ENCODE measurements at regions of chr10 and their contacts with region 1.

Region 1: GRCh38 chr10:24209946-24210491 is 1.1 kb downstream of the KIAA1217 start:
- DNase-seq: peak; percentile 70
- H3K4me3 ChIP-seq: peak overlapping the region; percentile 48
- H3K27ac ChIP-seq: peak overlapping the region; percentile 79
- H3K4me1 ChIP-seq: peaks cover 44% of the 10 kb centered on the region
- H3K27me3 ChIP-seq: no peaks in the 10 kb centered on the region
- CTCF ChIP-seq: no peak

Region 2: GRCh38 chr10:23897861-23898260 is 312.2 kb before region 1 on chr10:
- CTCF ChIA-PET with region 1: no interaction called
- POLR2A ChIA-PET with region 1: no interaction called
- intact Hi-C with region 1: no loop called
- DNase-seq: no peak
- H3K4me3 ChIP-seq: no peak overlapping the region
- H3K27ac ChIP-seq: no peak overlapping the region
- H3K4me1 ChIP-seq: no peaks in the 10 kb centered on the region
- H3K27me3 ChIP-seq: no peaks in the 10 kb centered on the region
- CTCF ChIP-seq: no peak

Region 3: GRCh38 chr10:24009736-24010135 is 200.3 kb before region 1 on chr10:
- CTCF ChIA-PET with region 1: no interaction called
- POLR2A ChIA-PET with region 1: interaction called, 13 read pairs
- intact Hi-C with region 1: no loop called
- DNase-seq: no peak
- H3K4me3 ChIP-seq: no peak overlapping the region
- H3K27ac ChIP-seq: no peak overlapping the region
- H3K4me1 ChIP-seq: peaks cover 37% of the 10 kb centered on the region
- H3K27me3 ChIP-seq: no peaks in the 10 kb centered on the region
- CTCF ChIP-seq: no peak

Region 4: GRCh38 chr10:24114556-24114955 is 95.5 kb before region 1 on chr10:
- CTCF ChIA-PET with region 1: no interaction called
- POLR2A ChIA-PET with region 1: no interaction called
- intact Hi-C with region 1: no loop called
- DNase-seq: peak; percentile 46
- H3K4me3 ChIP-seq: no peak overlapping the region
- H3K27ac ChIP-seq: peak overlapping the region; percentile 21
- H3K4me1 ChIP-seq: peaks cover 50% of the 10 kb centered on the region
- H3K27me3 ChIP-seq: no peaks in the 10 kb centered on the region
- CTCF ChIP-seq: no peak

Region 5: DNA sequence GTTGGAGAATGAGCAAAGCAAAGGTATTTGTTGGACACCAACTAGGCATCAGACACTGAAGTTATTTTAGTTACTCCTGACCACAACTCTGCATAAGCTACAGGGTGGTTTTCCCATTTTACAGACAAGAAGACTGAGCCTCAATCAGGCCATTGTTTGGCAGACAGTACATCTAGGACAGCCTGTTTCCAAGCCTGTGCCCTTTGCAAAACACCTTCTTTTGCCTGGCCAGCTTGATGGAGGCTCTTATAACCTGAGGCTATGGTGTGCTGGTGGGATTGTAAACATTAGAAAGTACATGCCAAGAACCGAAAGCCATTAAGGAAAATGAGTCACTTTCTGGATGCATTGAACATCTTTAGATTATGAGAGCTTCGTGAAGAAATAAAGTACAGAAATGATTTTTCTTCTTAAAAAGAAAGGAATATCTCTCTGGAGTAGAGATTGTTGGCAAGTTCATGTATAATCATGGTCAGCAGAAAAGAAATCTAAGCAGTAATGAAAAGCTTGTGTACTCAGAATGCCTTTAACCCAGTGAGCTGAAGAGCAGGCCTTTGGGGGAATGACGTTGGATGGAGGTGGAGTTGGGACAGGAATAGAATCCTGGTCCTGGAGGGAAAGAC is 139.5 kb after region 1 on chr10:
- CTCF ChIA-PET with region 1: no interaction called
- POLR2A ChIA-PET with region 1: interaction called, 13 read pairs
- intact Hi-C with region 1: loop called (anchors 2 kb)
- DNase-seq: no peak
- H3K4me3 ChIP-seq: no peak overlapping the region
- H3K27ac ChIP-seq: peak overlapping the region; percentile 86
- H3K4me1 ChIP-seq: peaks cover 83% of the 10 kb centered on the region
- H3K27me3 ChIP-seq: no peaks in the 10 kb centered on the region
- CTCF ChIP-seq: no peak

Region 6: DNA sequence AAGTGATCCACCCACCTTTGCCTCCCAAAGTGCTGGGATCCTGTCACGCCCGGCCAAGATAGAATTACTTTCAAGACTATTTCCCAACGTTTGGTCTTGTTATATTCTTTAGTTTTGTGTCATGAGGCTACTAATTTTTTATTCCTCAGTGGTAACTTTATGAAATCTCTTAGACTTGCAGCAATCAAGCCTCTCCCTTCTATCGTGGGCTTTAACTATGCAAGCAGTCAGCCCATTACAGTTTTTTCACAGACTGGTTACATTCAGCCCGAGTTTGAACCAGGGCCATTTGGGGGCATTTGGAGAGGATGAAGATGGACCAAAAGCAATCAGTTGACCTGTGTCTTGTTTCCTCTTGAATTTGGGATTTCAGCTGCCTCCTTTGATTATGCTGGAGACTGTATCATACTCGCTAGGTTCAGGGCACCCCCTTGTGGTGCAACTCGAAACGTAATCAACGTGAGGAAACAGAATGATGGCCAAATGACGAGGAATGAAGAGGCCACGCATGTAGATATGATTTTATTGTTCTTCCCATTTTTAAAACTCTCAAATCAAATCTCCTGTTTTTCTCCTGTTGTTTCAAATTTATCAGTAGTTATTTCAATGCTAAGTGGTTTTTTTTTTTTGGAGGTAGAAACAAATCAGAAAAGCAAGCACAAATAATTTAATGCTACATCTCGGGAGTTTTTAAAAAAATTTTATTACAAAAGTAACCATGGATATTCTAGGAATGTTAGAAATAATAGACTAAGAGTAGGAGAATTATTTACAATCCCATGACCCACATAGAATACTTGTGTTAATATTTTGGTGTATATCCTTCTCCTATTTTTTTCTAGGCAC is 150.5 kb after region 1 on chr10:
- CTCF ChIA-PET with region 1: no interaction called
- POLR2A ChIA-PET with region 1: interaction called, 14 read pairs
- intact Hi-C with region 1: no loop called
- DNase-seq: peak; percentile 90
- H3K4me3 ChIP-seq: no peak overlapping the region
- H3K27ac ChIP-seq: peak overlapping the region; percentile 8
- H3K4me1 ChIP-seq: peaks cover 63% of the 10 kb centered on the region
- H3K27me3 ChIP-seq: no peaks in the 10 kb centered on the region
- CTCF ChIP-seq: peak; percentile 87

Region 7: GRCh38 chr10:24518981-24519597 is 309.1 kb after region 1 on chr10:
- CTCF ChIA-PET with region 1: no interaction called
- POLR2A ChIA-PET with region 1: no interaction called
- intact Hi-C with region 1: loop called (anchors 5 kb)
- DNase-seq: peak; percentile 88
- H3K4me3 ChIP-seq: no peak overlapping the region
- H3K27ac ChIP-seq: peak overlapping the region; percentile 71
- H3K4me1 ChIP-seq: peaks cover 41% of the 10 kb centered on the region
- H3K27me3 ChIP-seq: no peaks in the 10 kb centered on the region
- CTCF ChIP-seq: peak; percentile 90

Region 8: DNA sequence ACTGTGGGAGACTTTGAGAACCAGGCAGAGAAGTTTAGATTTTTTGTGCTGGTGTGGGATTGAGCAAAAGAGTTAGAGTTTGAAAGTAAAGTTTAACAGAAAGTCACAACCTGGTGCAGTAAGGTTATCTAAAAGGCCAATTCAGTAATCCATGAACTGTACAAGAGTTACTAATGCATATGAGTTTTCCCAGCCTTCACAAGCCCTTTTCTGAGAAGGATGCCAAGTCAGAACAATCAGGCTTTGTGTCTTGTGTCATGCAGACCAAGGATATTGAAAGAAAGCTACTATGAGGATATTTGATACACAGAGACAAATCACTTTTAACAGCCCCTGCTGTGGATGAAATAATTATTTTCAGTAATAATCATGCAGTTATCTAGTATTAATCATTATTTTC is 1655.2 kb after region 1 on chr10:
- CTCF ChIA-PET with region 1: no interaction called
- POLR2A ChIA-PET with region 1: interaction called, 19 read pairs
- intact Hi-C with region 1: no loop called
- DNase-seq: no peak
- H3K4me3 ChIP-seq: no peak overlapping the region
- H3K27ac ChIP-seq: no peak overlapping the region
- H3K4me1 ChIP-seq: no peaks in the 10 kb centered on the region
- H3K27me3 ChIP-seq: no peaks in the 10 kb centered on the region
- CTCF ChIP-seq: no peak